HEK293 (cell line): ENCODE measurements at regions of chr1 and their contacts with region 1.

Region 1: DNA sequence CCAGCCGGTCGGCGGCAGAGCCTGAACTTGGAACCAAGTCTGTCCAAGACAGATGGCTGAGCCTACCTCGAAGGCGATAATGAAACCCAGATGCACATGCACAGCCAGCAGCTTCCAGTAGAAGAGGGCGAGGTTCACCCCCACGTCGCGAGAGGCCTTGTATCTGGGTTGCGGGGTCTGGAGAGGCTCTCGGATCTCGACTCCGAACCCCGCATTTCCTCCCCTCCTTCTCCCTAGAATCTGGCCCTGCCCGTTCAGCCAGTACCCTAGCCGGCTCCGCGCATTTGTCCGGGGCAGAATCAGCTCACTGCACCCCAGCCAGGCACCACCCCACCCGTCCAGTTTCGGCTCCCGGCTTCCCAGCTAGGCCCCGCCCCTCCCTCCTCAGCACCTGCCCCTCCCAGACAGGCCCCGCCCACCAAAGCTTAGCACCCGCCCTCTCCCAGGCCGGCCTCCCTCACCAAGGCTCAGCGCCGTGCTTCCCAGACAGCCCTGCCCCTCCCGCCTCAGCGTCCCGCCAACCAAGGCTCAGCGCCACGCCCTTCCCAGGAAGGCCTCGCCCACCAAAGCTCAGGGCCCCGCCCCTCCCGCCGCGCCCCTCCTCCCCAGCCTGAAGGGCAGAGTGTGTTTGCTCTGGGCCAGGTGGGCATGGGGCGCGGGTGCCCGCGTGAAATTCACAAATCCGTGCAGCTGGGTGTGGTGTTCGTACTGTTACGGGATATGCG is 4.8 kb upstream of the ARHGEF19 start:
- H3K4me3 ChIP-seq: peak overlapping the region; percentile 20; the same call in 1 of the 2 replicates
- H3K27ac ChIP-seq: no peak overlapping the region
- H3K4me1 ChIP-seq: no peaks in the 10 kb centered on the region
- CTCF ChIP-seq: no peak

Region 2: GRCh38 chr1:16206547-16207317 is 10.5 kb before region 1 on chr1:
- CTCF ChIA-PET with region 1: interaction called, 5 read pairs
- POLR2A ChIA-PET with region 1: interaction called, 27 read pairs
- H3K4me3 ChIP-seq: peak overlapping the region; percentile 31
- H3K27ac ChIP-seq: peak overlapping the region; percentile 57
- H3K4me1 ChIP-seq: no peaks in the 10 kb centered on the region
- CTCF ChIP-seq: no peak